ENCODE measurements at regions of chr19 and their contacts with region 1.

Region 1: GRCh38 chr19:5719961-5720790 is at the starts of genes CATSPERD and LONP1:
- DNase-seq: peak; percentile 98
- ATAC-seq: peak; percentile 97 to 99
- H3K4me3 ChIP-seq: peak within 1 kb of the TSS; percentile 73 to 93 (median 84)
- H3K27ac ChIP-seq: peak within 1 kb of the TSS; percentile 92 to 99 (median 96)
- H3K4me1 ChIP-seq: peaks cover 18 to 31% of the 10 kb centered on the region in 2 donors
- H3K27me3 ChIP-seq: no peaks in the 10 kb centered on the region
- CTCF ChIP-seq: peak; percentile 86 to 95 (median 94)
- POLR2A ChIP-seq: peak; percentile 76 to 89
- total RNA-seq, gene CATSPERD: not detected
- total RNA-seq, gene LONP1: 33.1 to 77.7 (median 70.4) TPM

Region 2: DNA sequence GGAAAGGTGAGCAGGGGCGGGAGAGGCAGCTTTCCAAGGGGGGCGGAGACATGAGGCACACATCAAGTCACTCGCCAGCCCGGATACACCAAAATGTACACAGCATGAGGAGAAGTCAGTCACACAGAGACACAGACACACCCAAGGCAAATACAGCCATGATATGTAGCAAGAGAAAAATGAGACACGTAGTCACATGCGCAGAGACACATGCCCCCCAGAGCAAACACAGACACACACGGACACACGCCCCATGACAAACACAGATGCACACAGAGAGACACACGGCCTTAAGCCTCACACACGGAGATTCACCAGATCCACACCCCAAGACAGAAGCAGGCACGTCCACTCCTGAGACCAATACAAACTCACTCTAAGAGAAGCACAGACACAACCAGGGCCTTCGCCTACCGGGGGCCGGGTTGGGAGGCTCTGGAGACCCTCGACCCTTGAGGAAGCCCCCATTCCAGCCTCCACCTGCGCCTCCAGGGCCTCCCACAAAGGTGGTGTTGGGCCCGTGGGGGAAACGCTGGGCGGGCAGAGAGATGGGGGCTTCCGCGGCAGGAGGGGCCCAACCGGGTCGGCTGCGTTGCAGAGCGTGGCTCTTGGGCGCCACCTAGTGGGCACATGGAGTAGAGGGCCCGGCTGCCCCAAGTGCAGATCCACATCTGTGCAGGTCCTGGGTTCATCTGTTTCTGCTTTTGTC is 142.2 kb before region 1 on chr19:
- in situ Hi-C with region 1: no loop called
- intact Hi-C with region 1: no loop called
- DNase-seq: peak in 1 of 2 donors; percentile 31
- ATAC-seq: peak; percentile 66 to 69
- H3K4me3 ChIP-seq: no peak overlapping the region
- H3K27ac ChIP-seq: no peak overlapping the region
- H3K4me1 ChIP-seq: peaks cover 4 to 6% of the 10 kb centered on the region in 2 donors
- H3K27me3 ChIP-seq: no peaks in the 10 kb centered on the region
- CTCF ChIP-seq: peak; percentile 85 to 99 (median 90)
- POLR2A ChIP-seq: no peak

Region 3: GRCh38 chr19:5680437-5681368 is 39.5 kb before region 1 on chr19 and contains the starts of genes HSD11B1L and MICOS13:
- in situ Hi-C with region 1: no loop called
- intact Hi-C with region 1: loop called (anchors 1 kb)
- DNase-seq: peak; percentile 98 to 99
- ATAC-seq: peak; percentile 92 to 93
- H3K4me3 ChIP-seq: peak within 1 kb of the TSS; percentile 72 to 93 (median 81)
- H3K27ac ChIP-seq: peak within 1 kb of the TSS; percentile 92 to 96 (median 94)
- H3K4me1 ChIP-seq: peaks cover 17 to 22% of the 10 kb centered on the region in 2 donors
- H3K27me3 ChIP-seq: no peaks in the 10 kb centered on the region
- CTCF ChIP-seq: peak in 1 of 5 experiments; percentile 16
- POLR2A ChIP-seq: peak; percentile 70 to 79
- total RNA-seq, gene HSD11B1L: 5.8 to 33.2 (median 21.5) TPM
- total RNA-seq, gene MICOS13: 45.7 to 122 (median 74.8) TPM

Region 4: GRCh38 chr19:5690125-5690954 is 29.8 kb before region 1 on chr19 and contains the start of gene RPL36:
- in situ Hi-C with region 1: no loop called
- intact Hi-C with region 1: loop called (anchors 1 kb)
- DNase-seq: peak; percentile 96
- ATAC-seq: peak; percentile 76 to 77
- H3K4me3 ChIP-seq: peak within 1 kb of the TSS; percentile 71 to 93 (median 84)
- H3K27ac ChIP-seq: peak within 1 kb of the TSS; percentile 83 to 94 (median 86)
- H3K4me1 ChIP-seq: peaks cover 21 to 25% of the 10 kb centered on the region in 2 donors
- H3K27me3 ChIP-seq: no peaks in the 10 kb centered on the region
- CTCF ChIP-seq: peak; percentile 94 to 98 (median 95)
- POLR2A ChIP-seq: peak; percentile 86 to 91
- total RNA-seq, gene RPL36: 329 to 784 (median 462) TPM

Region 5: GRCh38 chr19:5790573-5791520 is 70.7 kb after region 1 on chr19 and contains the start of gene DUS3L:
- in situ Hi-C with region 1: no loop called
- intact Hi-C with region 1: loop called (anchors 1 kb)
- DNase-seq: peak; percentile 96 to 98
- ATAC-seq: peak; percentile 95 to 96
- H3K4me3 ChIP-seq: peak within 1 kb of the TSS; percentile 78 to 94 (median 86)
- H3K27ac ChIP-seq: peak within 1 kb of the TSS; percentile 96 to 99 (median 98)
- H3K4me1 ChIP-seq: peaks cover 7 to 8% of the 10 kb centered on the region in 2 donors
- H3K27me3 ChIP-seq: peaks cover 0 to 4% (median 0%) of the 10 kb centered on the region in 3 donors
- CTCF ChIP-seq: peak in 1 of 5 experiments; percentile 24
- POLR2A ChIP-seq: peak; percentile 72 to 73
- total RNA-seq, gene DUS3L: 19.5 to 45.9 (median 25.0) TPM

Region 6: DNA sequence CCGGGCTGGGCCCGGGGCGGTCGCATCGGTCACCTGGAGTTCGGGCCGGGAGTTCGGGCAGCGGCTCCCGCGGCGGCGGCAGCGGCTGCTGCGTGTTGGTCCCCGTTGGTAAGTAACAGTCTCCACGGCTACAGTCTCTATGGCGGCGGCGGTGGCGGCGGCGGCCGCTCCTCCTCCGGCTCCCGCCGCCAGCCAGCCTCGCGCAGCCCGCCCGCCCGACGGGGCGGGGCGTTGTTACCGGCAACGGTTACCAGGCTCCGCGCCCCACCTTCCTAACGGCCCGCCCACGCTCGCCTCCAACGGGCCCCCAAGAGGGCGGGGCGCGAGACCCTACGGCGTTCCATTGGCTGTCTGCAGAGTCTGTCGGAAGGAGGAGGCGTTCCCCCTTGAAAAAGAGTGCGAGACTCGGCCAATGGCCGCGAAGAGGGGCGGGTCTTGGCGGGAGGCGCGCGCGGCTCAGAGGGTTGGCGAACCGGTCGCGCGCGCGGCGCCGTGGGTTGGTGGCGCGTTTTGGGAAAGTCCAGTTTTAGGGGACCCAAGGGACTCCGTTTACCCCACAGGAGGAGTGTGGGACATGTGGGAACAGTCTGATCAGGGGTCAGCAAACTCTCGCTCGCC is 390.3 kb after region 1 on chr19 and contains the start of gene RFX2:
- in situ Hi-C with region 1: no loop called
- intact Hi-C with region 1: loop called (anchors 1 kb)
- DNase-seq: peak; percentile 98
- ATAC-seq: peak; percentile 100
- H3K4me3 ChIP-seq: peak within 1 kb of the TSS; percentile 65 to 81 (median 73)
- H3K27ac ChIP-seq: peak within 1 kb of the TSS; percentile 57 to 69 (median 64)
- H3K4me1 ChIP-seq: peaks cover 10 to 16% of the 10 kb centered on the region in 2 donors
- H3K27me3 ChIP-seq: peaks cover 0 to 15% (median 0%) of the 10 kb centered on the region in 3 donors
- CTCF ChIP-seq: no peak
- POLR2A ChIP-seq: peak; percentile 38 to 41
- total RNA-seq, gene RFX2: 0.31 to 10.5 (median 2.2) TPM

Measured in gastrocnemius medialis (tissue), 4 donors.